Left cardiac atrium (tissue), 4 donors: ENCODE measurements at regions of chr12 and their contacts with region 1.

Region 1: GRCh38 chr12:56189176-56189917 is at the start of gene SMARCC2:
- DNase-seq: peak; percentile 90
- ATAC-seq: peak; percentile 80 to 85
- total RNA-seq, gene SMARCC2: 65.2 to 68.5 TPM

Region 2: GRCh38 chr12:56117778-56118687 is 71.3 kb before region 1 on chr12 and contains the start of gene ZC3H10:
- intact Hi-C with region 1: loop called in 1 of 2 experiments (anchors 2 kb)
- DNase-seq: peak; percentile 98
- ATAC-seq: peak; percentile 84 to 87
- total RNA-seq, gene ZC3H10: 6.6 to 7.6 TPM

Region 3: GRCh38 chr12:56127888-56128669 is 61.3 kb before region 1 on chr12 and contains the start of gene ESYT1:
- intact Hi-C with region 1: loop called in 1 of 2 experiments (anchors 2 kb)
- DNase-seq: peak; percentile 98
- ATAC-seq: peak; percentile 95 to 96
- total RNA-seq, gene ESYT1: 54.1 to 63.9 TPM

Region 4: DNA sequence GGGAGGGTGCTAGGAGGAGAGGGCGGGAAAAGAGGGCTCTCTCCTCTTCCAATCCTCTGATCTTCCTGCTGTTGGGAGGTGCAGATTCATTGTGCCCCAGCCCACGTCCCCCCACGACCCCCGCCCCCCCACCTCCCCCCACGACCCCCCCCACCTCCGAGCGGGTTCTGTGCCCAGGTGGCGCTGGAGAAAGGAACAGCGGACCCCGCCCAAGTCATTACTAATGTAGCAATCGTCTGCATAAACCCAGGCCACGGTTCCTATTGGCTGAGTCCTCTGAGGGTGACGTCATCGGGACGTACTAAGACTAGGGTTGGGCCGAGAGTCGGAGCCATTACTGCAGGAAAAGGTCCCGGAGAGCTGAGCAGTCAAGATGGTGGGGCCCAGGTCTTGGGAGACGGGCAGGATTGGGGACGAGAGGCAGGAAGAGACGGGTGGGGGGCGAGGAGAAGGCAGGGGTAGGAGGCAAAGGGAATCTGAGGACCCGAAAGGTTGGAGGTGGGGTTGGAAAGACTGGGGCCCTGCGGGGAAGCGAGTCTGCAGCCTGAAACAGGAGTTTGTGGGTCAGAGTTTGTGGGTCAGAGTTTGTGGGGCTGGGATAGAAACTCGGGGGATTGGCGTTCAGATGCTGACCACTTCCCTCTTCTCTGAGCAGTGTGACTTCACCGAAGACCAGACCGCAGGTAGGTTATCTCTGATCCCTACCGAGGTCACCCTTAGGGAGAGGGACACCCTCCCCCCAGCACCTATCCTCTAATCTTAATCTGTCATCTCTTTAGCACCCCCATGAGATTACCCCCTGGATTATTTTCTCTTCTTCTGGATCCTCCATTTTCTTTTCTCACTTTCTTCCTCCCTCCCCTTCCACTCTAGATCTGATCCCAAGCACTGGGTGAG is 31.1 kb before region 1 on chr12 and contains the start of gene MYL6:
- intact Hi-C with region 1: loop called in 1 of 2 experiments (anchors 2 kb)
- DNase-seq: peak; percentile 97
- ATAC-seq: peak; percentile 91
- total RNA-seq, gene MYL6: 1,071 to 1,319 TPM

Region 5: GRCh38 chr12:56224102-56224701 is 34.9 kb after region 1 on chr12 and contains the start of gene NABP2:
- intact Hi-C with region 1: loop called in 1 of 2 experiments (anchors 5 kb)
- DNase-seq: peak; percentile 99
- ATAC-seq: peak; percentile 87 to 89
- total RNA-seq, gene NABP2: 19.4 to 21.7 TPM

Region 6: GRCh38 chr12:56271031-56271430 is 81.7 kb after region 1 on chr12:
- intact Hi-C with region 1: no loop called
- DNase-seq: no peak
- ATAC-seq: peak; percentile 11 to 14

Region 7: DNA sequence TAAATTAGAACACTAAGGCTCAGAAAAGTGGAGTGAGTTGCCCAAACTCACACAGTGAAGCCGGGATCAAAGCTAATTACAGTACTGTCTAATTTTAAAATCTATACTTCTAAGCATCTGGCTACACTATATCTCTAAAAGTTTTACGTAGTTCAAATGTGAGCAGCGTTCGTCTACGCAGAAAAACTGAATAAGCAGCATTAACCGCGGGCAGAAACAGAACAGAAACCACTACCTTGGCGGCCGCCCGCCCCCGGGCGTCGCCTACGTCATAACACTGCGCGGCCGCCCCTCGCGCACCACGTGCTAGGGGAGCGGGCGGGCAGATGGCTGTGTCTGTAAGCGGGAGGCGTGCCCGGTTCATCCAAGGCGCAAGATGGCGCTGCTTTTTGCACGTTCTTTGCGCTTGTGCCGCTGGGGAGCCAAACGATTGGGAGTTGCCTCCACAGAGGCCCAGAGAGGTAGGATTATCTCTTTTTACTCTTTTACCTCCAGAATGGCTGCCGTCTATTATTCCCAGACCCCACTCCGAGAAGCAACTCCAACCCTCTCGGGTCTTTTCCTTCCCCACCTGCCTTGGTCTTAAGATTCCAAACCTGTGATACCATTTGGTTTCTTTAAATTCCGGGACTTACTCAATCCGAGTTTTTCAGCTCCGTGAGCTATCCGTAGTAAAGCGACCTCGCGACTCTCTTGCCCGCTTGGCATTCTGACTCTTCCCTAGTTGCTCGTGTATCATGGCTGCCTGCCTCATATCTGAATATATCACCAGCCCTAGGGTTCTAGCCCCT is 279.1 kb after region 1 on chr12 and contains the start of gene SPRYD4:
- intact Hi-C with region 1: loop called in 1 of 2 experiments (anchors 5 kb)
- DNase-seq: peak; percentile 95
- ATAC-seq: peak; percentile 98 to 99
- total RNA-seq, gene SPRYD4: 2.3 to 3.2 TPM